ENCODE measurements at regions of chr11 and their contacts with region 1.

Region 1: DNA sequence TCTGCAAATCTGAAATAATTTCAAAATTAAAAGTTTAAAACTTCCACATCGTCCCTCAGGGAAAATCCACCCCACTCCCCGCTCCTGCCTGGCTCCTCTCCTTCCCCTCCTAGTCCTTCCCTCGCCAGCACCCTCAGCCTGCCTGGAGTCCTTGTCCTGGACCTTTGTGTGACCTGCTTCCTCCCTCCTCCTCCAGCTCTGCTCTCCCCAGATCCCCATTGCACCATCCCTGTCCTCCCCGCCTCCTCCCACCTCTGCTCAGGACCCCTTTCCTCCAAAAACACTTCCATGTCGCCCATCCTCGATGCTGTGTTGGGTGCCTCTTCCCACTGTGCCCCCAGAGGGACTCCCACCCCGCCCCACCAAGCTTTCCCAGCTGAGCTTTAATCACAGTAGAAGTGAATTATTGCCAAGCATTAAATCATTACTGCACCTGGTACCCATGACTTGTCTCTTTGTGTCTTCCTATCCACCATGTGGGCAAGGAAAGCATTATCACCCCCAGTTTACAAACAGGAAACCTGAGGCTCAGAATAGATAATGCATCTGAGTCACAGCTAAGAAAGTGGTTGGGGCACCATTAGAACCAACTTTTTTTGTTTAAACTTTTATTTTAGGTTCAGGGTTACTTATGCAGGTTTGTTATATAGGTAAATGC is 2.4 kb upstream of the ZP1 start:
- DNase-seq: peak in 1 of 4 experiments; percentile 46
- ATAC-seq: peak; percentile 52
- H3K4me3 ChIP-seq: no peak overlapping the region
- H3K27ac ChIP-seq: no peak overlapping the region; the same call in 2 of the 3 replicates
- H3K4me1 ChIP-seq: peaks cover 25 to 29% of the 10 kb centered on the region in 2 experiments
- H3K27me3 ChIP-seq: no peaks in the 10 kb centered on the region
- CTCF ChIP-seq: no peak
- EP300 ChIP-seq: peak; percentile 8; the same call in 1 of the 2 replicates
- POLR2A ChIP-seq: no peak
- RAD21 ChIP-seq: no peak

Region 2: GRCh38 chr11:60913793-60914632 is 49.0 kb after region 1 on chr11 and contains the start of gene TMEM109:
- CTCF ChIA-PET with region 1: no interaction called
- POLR2A ChIA-PET with region 1: no interaction called
- in situ Hi-C with region 1: no loop called
- intact Hi-C with region 1: loop called (anchors 2 kb)
- DNase-seq: peak; percentile 93 to 95 (median 94)
- ATAC-seq: peak; percentile 90
- H3K4me3 ChIP-seq: peak within 1 kb of the TSS; percentile 50
- H3K27ac ChIP-seq: peak within 1 kb of the TSS; percentile 93
- H3K4me1 ChIP-seq: peaks cover 17 to 29% of the 10 kb centered on the region in 2 experiments; a peak in 4 of 5 replicates
- H3K27me3 ChIP-seq: no peaks in the 10 kb centered on the region
- CTCF ChIP-seq: no peak
- EP300 ChIP-seq: 0 out of 2 replicates have a peak, but pooled peaks have one; percentile 16
- POLR2A ChIP-seq: peak; percentile 76
- RAD21 ChIP-seq: no peak
- polyA plus RNA-seq, gene TMEM109: 9.2 to 18.3 TPM

Region 3: GRCh38 chr11:60978546-60979380 is 113.8 kb after region 1 on chr11:
- CTCF ChIA-PET with region 1: no interaction called
- POLR2A ChIA-PET with region 1: no interaction called
- in situ Hi-C with region 1: no loop called
- intact Hi-C with region 1: no loop called
- DNase-seq: no peak
- ATAC-seq: no peak
- H3K4me3 ChIP-seq: no peak overlapping the region
- H3K27ac ChIP-seq: no peak overlapping the region
- H3K4me1 ChIP-seq: no peaks in the 10 kb centered on the region
- H3K27me3 ChIP-seq: peaks cover 39 to 65% of the 10 kb centered on the region in 2 experiments
- CTCF ChIP-seq: no peak
- EP300 ChIP-seq: no peak
- POLR2A ChIP-seq: no peak
- RAD21 ChIP-seq: no peak

Measured in K562 (cell line).